ENCODE measurements at regions of chr19 and their contacts with region 1.

Region 1: DNA sequence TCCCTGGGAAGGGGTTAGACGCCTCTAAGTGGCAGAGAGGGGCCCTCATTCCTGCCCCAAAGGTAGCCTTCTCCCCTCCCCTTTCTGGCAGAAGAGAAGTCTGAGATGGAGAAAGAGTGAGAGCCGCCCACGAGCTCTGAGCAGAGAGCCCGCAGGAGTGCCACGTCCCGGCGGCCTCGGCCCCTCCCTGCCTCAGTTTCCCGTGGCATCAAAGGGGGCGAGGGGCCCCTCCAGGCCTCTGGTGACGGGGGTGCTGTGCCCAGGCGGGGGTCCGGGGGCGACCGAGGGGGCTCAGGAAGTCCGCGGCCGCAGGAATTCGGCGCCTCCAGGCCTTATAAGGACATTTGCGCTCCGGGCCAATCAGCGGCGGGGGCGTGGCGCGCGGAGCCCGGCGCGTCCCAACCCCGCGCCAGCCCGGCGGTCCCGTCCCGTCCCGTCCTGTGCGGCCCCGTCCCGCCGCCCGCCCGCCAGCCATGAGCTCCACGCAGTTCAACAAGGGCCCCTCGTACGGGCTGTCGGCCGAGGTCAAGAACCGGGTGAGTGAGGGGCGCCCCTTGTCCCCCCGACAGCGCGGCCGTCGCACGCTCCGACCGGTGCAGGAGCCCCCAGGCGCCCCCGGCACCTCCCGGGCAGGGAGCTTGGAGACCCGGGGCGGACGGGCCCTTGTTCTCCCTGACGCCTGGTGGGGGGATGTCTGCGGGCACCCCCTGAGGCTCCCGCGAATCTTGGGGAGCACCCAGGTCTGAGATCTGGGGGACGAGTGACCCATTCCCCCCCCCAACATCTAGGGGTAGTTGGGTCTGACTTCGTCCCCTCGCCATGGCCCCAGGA is at the start of gene CNN2:
- DNase-seq: peak; percentile 83
- ATAC-seq: peak; percentile 58
- H3K4me3 Mint-ChIP-seq: peak within 1 kb of the TSS; percentile 88
- H3K27ac Mint-ChIP-seq: peak within 1 kb of the TSS; percentile 87
- H3K4me1 Mint-ChIP-seq: peaks cover 31% of the 10 kb centered on the region
- H3K27me3 Mint-ChIP-seq: no peaks in the 10 kb centered on the region
- total RNA-seq, gene CNN2: 108 to 130 TPM

Region 2: GRCh38 chr19:1039646-1040475 is 13.5 kb after region 1 on chr19 and contains the start of gene ABCA7:
- CTCF ChIA-PET with region 1: interaction called, 7 read pairs
- POLR2A ChIA-PET with region 1: interaction called, 4 read pairs
- intact Hi-C with region 1: loop called (anchors 1 to 2 kb)
- DNase-seq: peak; percentile 100
- ATAC-seq: peak; percentile 96
- H3K4me3 Mint-ChIP-seq: peak within 1 kb of the TSS; percentile 86
- H3K27ac Mint-ChIP-seq: peak within 1 kb of the TSS; percentile 74
- H3K4me1 Mint-ChIP-seq: peaks cover 34% of the 10 kb centered on the region
- H3K27me3 Mint-ChIP-seq: no peaks in the 10 kb centered on the region
- total RNA-seq, gene ABCA7: 14.4 to 16.9 TPM

Region 3: GRCh38 chr19:1122972-1123363 is 96.6 kb after region 1 on chr19:
- CTCF ChIA-PET with region 1: no interaction called
- POLR2A ChIA-PET with region 1: no interaction called
- intact Hi-C with region 1: no loop called
- DNase-seq: peak; percentile 84
- ATAC-seq: peak; percentile 80
- H3K4me3 Mint-ChIP-seq: no peak overlapping the region
- H3K27ac Mint-ChIP-seq: no peak overlapping the region
- H3K4me1 Mint-ChIP-seq: peaks cover 10% of the 10 kb centered on the region
- H3K27me3 Mint-ChIP-seq: no peaks in the 10 kb centered on the region